PC-9 (cell line): ENCODE measurements at regions of chr4 and their contacts with region 1.

Region 1: DNA sequence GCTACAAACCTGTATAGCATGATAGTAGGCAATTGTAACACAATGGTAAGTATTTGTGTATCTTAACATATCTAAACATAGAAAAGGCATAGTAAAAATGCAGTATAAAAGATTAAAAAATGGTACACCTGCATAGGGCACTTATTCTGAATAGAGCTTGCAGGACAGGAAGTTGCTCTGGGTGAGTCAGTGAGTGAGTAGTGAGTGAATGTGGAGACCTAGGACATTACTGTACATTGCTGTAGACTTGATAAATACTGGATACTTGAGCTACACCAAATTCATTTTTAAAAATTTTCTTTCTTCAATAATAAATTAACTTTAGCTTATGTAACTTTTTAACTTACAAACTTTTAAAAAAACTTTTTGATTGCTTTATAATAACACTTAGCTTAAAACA is 68.2 kb upstream of the MAML3 start:
- DNase-seq: no peak
- H3K4me3 ChIP-seq: no peak overlapping the region
- H3K27ac ChIP-seq: 0 out of 2 replicates have a peak overlapping the region, but pooled peaks have one; percentile 29
- H3K4me1 ChIP-seq: no peaks in the 10 kb centered on the region
- H3K27me3 ChIP-seq: no peaks in the 10 kb centered on the region
- CTCF ChIP-seq: no peak

Region 2: DNA sequence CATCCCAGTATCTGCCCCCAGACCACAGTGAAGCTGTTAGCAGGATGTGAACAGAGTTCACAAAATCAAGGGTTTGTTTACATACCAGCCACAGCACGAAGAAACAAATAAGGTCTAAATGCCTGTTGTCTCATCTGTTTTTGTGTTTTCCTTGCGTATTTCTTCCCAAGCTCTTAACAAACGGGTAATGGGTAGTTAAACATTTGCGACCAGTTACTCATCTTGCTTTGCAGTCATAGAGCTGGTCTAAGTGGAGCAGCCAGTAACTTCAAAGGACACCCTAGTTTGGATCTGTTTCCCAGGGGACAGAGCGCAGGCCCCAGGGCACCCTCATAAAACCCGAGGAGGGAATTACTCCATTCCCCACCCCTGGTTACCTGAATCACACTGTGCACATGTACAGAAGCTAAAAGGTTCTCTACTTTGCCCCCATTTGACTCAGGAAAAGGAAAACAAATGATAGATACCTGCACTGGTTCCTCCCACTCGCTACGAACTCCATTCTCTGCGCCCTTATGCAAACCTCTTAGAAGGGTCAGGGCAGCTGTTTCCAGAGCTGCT is 137.0 kb before region 1 on chr4:
- CTCF ChIA-PET with region 1: no interaction called
- POLR2A ChIA-PET with region 1: no interaction called
- intact Hi-C with region 1: no loop called
- DNase-seq: peak in 1 of 2 experiments; percentile 76
- H3K4me3 ChIP-seq: peak overlapping the region; percentile 11; the same call in 1 of the 2 replicates
- H3K27ac ChIP-seq: peak overlapping the region; percentile 76
- H3K4me1 ChIP-seq: peaks cover 57% of the 10 kb centered on the region
- H3K27me3 ChIP-seq: no peaks in the 10 kb centered on the region
- CTCF ChIP-seq: no peak

Region 3: DNA sequence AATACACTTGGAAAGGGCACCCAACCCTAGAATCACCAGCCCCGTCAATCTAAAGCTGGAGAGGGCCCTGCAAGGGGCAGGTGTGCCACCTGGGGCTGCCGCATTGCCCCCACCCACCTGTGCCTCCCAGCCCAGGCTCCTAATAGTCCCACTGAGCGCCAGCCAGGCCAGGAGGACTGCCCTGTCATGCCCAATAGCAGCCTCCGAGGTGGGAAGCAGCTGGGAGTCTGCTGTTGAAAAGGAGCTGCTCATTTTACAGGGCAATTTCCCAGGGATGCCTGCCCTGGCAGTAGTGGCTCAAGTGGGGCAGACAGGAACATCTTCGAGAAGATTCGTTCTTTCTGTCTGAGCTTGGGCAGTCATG is 16.5 kb after region 1 on chr4:
- CTCF ChIA-PET with region 1: no interaction called
- POLR2A ChIA-PET with region 1: interaction called, 10 read pairs
- intact Hi-C with region 1: no loop called
- DNase-seq: no peak
- H3K4me3 ChIP-seq: no peak overlapping the region
- H3K27ac ChIP-seq: no peak overlapping the region
- H3K4me1 ChIP-seq: no peaks in the 10 kb centered on the region
- H3K27me3 ChIP-seq: no peaks in the 10 kb centered on the region
- CTCF ChIP-seq: no peak